CD4-positive, alpha-beta memory T cell (primary cell): ENCODE measurements at regions of chr1 and their contacts with region 1.

Region 1: DNA sequence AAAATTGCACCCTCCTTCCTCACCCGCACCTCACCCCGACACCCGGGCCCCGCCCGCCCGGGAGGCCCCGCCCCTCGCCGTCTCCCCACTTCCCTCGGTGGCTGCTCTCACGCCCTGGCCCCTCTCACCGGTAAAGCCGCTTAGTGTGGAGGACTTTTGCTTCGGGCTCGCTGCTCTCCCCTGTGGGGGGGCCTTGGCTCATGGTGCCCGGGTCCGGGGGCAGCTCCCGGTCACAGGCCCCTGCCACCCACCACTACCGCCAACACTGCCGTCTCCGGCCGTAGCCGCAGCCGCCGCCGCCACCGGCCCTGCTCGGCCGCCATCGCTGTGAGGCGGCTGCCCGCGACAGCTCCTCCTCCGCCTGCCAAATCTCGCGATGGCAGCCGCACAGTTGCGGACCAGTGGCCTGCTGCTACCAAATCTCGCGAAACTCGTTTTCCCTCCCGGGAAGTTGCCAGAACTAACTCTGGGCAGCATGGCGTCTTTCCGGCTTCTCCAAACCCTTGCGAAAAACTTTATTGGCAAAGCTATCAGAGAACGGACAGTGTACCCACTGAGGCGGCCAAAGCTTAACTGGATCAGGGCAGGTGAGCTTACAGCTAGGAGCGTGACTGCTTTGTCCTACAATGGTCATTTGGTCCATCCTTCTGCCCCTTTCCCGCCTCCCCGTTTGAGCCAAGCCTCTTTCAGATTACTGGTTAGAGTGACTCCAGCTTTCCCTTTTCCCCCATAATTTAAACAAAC is at the start of gene SMG5:
- DNase-seq: peak; percentile 97 to 99 (median 98)
- H3K4me3 ChIP-seq: peak within 1 kb of the TSS; percentile 93 to 96
- H3K4me3 Mint-ChIP-seq: peak within 1 kb of the TSS; percentile 90 to 99 (median 96)
- H3K27ac ChIP-seq: peak within 1 kb of the TSS; percentile 80
- H3K27ac Mint-ChIP-seq: peak within 1 kb of the TSS; percentile 90 to 99 (median 96)
- H3K4me1 ChIP-seq: peaks cover 38% of the 10 kb centered on the region
- H3K4me1 Mint-ChIP-seq: peaks cover 26 to 51% (median 36%) of the 10 kb centered on the region in 4 donors
- H3K27me3 ChIP-seq: no peaks in the 10 kb centered on the region
- H3K27me3 Mint-ChIP-seq: no peaks in the 10 kb centered on the region
- total RNA-seq, gene SMG5: 69.8 to 71.6 TPM

Region 2: GRCh38 chr1:156054500-156055280 is 228.0 kb before region 1 on chr1 and contains the start of gene LAMTOR2:
- CTCF ChIA-PET with region 1: no interaction called
- POLR2A ChIA-PET with region 1: interaction called, 6 read pairs
- intact Hi-C with region 1: loop called (anchors 2 kb)
- DNase-seq: peak; percentile 91 to 95 (median 93)
- H3K4me3 ChIP-seq: peak within 1 kb of the TSS; percentile 96 to 99
- H3K4me3 Mint-ChIP-seq: peak within 1 kb of the TSS; percentile 93 to 98 (median 96)
- H3K27ac ChIP-seq: peak within 1 kb of the TSS; percentile 84
- H3K27ac Mint-ChIP-seq: peak within 1 kb of the TSS; percentile 93 to 99 (median 96)
- H3K4me1 ChIP-seq: peaks cover 17% of the 10 kb centered on the region
- H3K4me1 Mint-ChIP-seq: peaks cover 13 to 48% (median 28%) of the 10 kb centered on the region in 4 donors
- H3K27me3 ChIP-seq: no peaks in the 10 kb centered on the region
- H3K27me3 Mint-ChIP-seq: no peaks in the 10 kb centered on the region
- total RNA-seq, gene LAMTOR2: 33.0 to 35.5 TPM

Region 3: DNA sequence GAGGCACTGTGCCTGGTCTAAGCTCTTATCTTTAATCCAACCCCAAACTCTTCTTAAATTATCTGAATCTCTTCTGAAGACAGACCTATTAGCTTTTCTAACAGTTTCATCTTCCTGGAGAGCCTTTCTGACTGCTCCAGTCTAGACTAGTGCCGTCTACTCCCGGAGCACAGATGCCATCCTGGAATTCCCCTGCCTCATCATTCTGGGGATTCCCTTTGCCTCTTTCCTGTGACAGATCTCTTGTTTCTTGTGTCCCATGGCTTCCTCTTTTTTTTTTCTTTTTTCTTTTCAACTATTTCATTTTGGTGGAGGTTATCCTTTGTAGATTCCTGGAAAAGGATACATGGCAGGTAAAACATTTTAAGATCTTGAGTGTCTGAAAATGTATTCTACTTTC is 117.6 kb before region 1 on chr1:
- CTCF ChIA-PET with region 1: no interaction called
- POLR2A ChIA-PET with region 1: no interaction called
- intact Hi-C with region 1: no loop called
- DNase-seq: no peak
- H3K4me3 ChIP-seq: no peak overlapping the region
- H3K4me3 Mint-ChIP-seq: no peak overlapping the region
- H3K27ac ChIP-seq: no peak overlapping the region
- H3K27ac Mint-ChIP-seq: peak overlapping the region in 2 of 7 donors; percentile 9 to 61
- H3K4me1 ChIP-seq: peaks cover 8% of the 10 kb centered on the region
- H3K4me1 Mint-ChIP-seq: peaks cover 4 to 18% (median 8%) of the 10 kb centered on the region in 4 donors
- H3K27me3 ChIP-seq: no peaks in the 10 kb centered on the region
- H3K27me3 Mint-ChIP-seq: peaks cover 0 to 2% of the 10 kb centered on the region in 2 donors

Region 4: GRCh38 chr1:156212833-156213643 is 69.6 kb before region 1 on chr1 and contains the start of gene PMF1:
- CTCF ChIA-PET with region 1: interaction called, 4 read pairs
- POLR2A ChIA-PET with region 1: interaction called, 38 read pairs
- intact Hi-C with region 1: loop called (anchors 1 kb)
- DNase-seq: peak; percentile 94 to 98 (median 95)
- H3K4me3 ChIP-seq: peak within 1 kb of the TSS; percentile 83 to 93
- H3K4me3 Mint-ChIP-seq: peak within 1 kb of the TSS; percentile 93 to 99 (median 96)
- H3K27ac ChIP-seq: peak within 1 kb of the TSS; percentile 98
- H3K27ac Mint-ChIP-seq: peak within 1 kb of the TSS; percentile 97 to 100 (median 99)
- H3K4me1 ChIP-seq: peaks cover 29% of the 10 kb centered on the region
- H3K4me1 Mint-ChIP-seq: peaks cover 15 to 43% (median 31%) of the 10 kb centered on the region in 4 donors
- H3K27me3 ChIP-seq: no peaks in the 10 kb centered on the region
- H3K27me3 Mint-ChIP-seq: no peaks in the 10 kb centered on the region
- total RNA-seq, gene PMF1: 39.0 to 40.2 TPM

Region 5: GRCh38 chr1:156270314-156270713 is 12.3 kb before region 1 on chr1:
- CTCF ChIA-PET with region 1: interaction called, 5 read pairs
- POLR2A ChIA-PET with region 1: interaction called, 25 read pairs
- intact Hi-C with region 1: no loop called
- DNase-seq: no peak
- H3K4me3 ChIP-seq: no peak overlapping the region
- H3K4me3 Mint-ChIP-seq: no peak overlapping the region
- H3K27ac ChIP-seq: no peak overlapping the region
- H3K27ac Mint-ChIP-seq: peak overlapping the region in 1 of 7 donors; percentile 78
- H3K4me1 ChIP-seq: no peaks in the 10 kb centered on the region
- H3K4me1 Mint-ChIP-seq: peaks cover 0 to 2% (median 0%) of the 10 kb centered on the region in 4 donors
- H3K27me3 ChIP-seq: no peaks in the 10 kb centered on the region
- H3K27me3 Mint-ChIP-seq: no peaks in the 10 kb centered on the region

Region 6: DNA sequence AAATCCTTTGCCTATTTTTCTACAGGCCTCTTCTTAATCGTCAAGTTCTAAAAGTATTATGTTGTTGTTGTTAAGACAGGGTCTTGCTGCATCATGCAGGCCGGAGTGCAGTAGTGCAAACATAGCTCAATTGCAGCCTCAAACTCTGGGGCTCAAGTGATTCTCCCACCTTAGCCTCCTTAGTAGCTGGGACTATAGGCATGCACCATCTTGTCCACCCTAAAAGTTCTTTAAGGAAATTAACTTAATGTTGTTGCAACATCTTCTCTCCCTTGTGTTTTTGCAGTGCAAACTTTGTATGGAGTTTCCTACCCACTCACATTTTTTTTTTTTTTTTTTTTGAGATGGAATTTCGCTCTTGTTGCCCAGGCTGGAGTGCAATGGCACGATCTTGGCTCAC is 20.6 kb after region 1 on chr1:
- CTCF ChIA-PET with region 1: no interaction called
- POLR2A ChIA-PET with region 1: interaction called, 11 read pairs
- intact Hi-C with region 1: no loop called
- DNase-seq: no peak
- H3K4me3 ChIP-seq: no peak overlapping the region
- H3K4me3 Mint-ChIP-seq: no peak overlapping the region
- H3K27ac ChIP-seq: no peak overlapping the region
- H3K27ac Mint-ChIP-seq: no peak overlapping the region
- H3K4me1 ChIP-seq: no peaks in the 10 kb centered on the region
- H3K4me1 Mint-ChIP-seq: no peaks in the 10 kb centered on the region
- H3K27me3 ChIP-seq: no peaks in the 10 kb centered on the region
- H3K27me3 Mint-ChIP-seq: no peaks in the 10 kb centered on the region

Region 7: GRCh38 chr1:156767101-156767878 is 484.6 kb after region 1 on chr1 and contains the start of gene PRCC:
- CTCF ChIA-PET with region 1: no interaction called
- POLR2A ChIA-PET with region 1: interaction called, 4 read pairs
- intact Hi-C with region 1: loop called (anchors 1 kb)
- DNase-seq: peak; percentile 97 to 100 (median 99)
- H3K4me3 ChIP-seq: peak within 1 kb of the TSS; percentile 98 to 99
- H3K4me3 Mint-ChIP-seq: no peak within 1 kb of the TSS
- H3K27ac ChIP-seq: peak within 1 kb of the TSS; percentile 98
- H3K27ac Mint-ChIP-seq: no peak within 1 kb of the TSS
- H3K4me1 ChIP-seq: peaks cover 48% of the 10 kb centered on the region
- H3K4me1 Mint-ChIP-seq: peaks cover 24 to 39% (median 34%) of the 10 kb centered on the region in 4 donors
- H3K27me3 ChIP-seq: no peaks in the 10 kb centered on the region
- H3K27me3 Mint-ChIP-seq: no peaks in the 10 kb centered on the region
- total RNA-seq, gene PRCC: 60.9 to 61.3 TPM